A549 (cell line): ENCODE measurements at regions of chr5 and their contacts with region 1.

Region 1: DNA sequence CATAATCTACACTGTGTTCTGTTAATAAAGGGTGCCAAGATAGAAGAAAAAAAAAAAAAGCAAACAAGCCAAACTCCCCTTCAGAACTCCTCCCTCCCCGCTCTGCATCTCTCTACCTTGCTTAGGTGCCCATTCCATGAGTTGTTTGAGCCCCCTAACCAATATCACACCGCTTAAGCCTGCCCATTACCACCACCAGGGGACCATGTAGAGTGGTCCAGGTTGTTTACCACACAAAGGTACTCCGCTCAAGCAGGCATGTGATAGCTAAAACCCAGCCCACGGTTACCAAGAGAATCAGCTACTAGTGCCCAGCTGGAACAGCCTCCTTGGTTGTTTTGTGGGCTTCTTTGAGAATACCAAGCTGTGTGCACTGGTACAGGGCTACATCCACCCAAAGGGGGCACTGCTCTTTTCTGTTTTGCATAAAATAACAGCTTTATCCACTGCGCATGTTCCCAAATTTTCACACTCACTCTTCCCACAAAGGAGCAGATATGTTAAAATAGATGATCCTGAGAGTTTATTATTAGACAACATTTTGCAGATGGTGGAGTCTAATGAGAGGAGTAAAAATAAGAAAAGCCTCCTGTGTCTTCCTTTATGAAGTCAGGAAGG is 304.1 kb downstream of the DEPDC1B start:
- DNase-seq: no peak
- ATAC-seq: peak in 1 of 2 experiments; percentile 53; a peak in 3 of 6 replicates
- H3K4me3 ChIP-seq: no peak overlapping the region
- H3K27ac ChIP-seq: no peak overlapping the region
- H3K4me1 ChIP-seq: no peaks in the 10 kb centered on the region
- CTCF ChIP-seq: no peak
- EP300 ChIP-seq: no peak
- POLR2A ChIP-seq: no peak
- RAD21 ChIP-seq: no peak

Region 2: GRCh38 chr5:60382716-60383115 is 13.1 kb before region 1 on chr5:
- CTCF ChIA-PET with region 1: interaction called, 12 read pairs
- POLR2A ChIA-PET with region 1: no interaction called
- DNase-seq: peak; percentile 24 to 59
- ATAC-seq: peak in 1 of 2 experiments; percentile 64; a peak in 4 of 6 replicates
- H3K4me3 ChIP-seq: no peak overlapping the region
- H3K27ac ChIP-seq: no peak overlapping the region
- H3K4me1 ChIP-seq: peaks cover 11% of the 10 kb centered on the region; the same call in 1 of the 3 replicates
- CTCF ChIP-seq: peak; percentile 69
- EP300 ChIP-seq: no peak
- POLR2A ChIP-seq: no peak
- RAD21 ChIP-seq: peak; percentile 69 to 80

Region 3: GRCh38 chr5:60447488-60447920 is 51.7 kb after region 1 on chr5:
- CTCF ChIA-PET with region 1: no interaction called
- POLR2A ChIA-PET with region 1: no interaction called
- DNase-seq: peak in 1 of 2 experiments; percentile 65
- ATAC-seq: peak in 1 of 2 experiments; percentile 81; a peak in 3 of 6 replicates
- H3K4me3 ChIP-seq: no peak overlapping the region; the same call in 2 of the 3 replicates
- H3K27ac ChIP-seq: peak overlapping the region; percentile 34 to 45; a peak in 4 of 6 replicates
- H3K4me1 ChIP-seq: peaks cover 15% of the 10 kb centered on the region; the same call in 1 of the 3 replicates
- CTCF ChIP-seq: no peak
- EP300 ChIP-seq: no peak
- POLR2A ChIP-seq: no peak
- RAD21 ChIP-seq: no peak